ENCODE measurements at regions of chr22 and their contacts with region 1.

Region 1: DNA sequence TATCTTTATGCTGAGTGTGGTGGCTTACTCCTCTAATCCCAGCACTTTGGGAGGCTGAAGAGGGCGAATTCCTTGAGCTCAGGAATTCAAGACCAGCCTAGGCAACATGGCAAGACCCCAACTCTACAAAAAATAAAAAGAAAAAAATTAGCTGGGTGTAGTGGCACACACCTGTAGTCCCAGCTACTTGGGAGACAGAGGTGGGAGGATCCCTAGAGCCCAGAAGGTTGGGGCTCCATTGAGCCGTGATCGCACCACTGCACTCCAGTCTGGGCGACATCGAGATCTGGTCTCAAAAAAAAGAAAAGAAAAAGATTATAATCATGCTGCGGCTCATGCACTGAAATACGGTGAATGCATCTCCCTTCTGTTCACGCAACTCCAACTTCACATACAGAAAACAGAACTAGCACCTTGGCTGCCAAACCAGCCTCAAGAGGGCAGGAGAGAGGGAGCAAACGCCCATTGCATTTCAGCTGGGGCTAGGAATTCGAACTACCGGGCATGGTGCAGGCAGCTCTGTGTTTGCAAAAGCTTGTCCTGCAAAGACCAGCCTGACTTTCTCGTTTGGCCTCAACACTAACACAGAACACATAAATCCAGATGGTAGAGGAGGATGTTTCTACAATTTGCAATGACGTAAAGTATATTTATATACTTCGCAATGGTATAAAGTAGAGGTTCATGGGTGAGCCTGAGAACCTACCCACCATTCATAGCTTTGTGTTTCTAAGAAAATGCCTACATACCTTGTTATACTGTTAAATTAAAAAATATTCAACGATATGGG is 6.3 kb upstream of the SYNGR1 start:
- DNase-seq: peak; percentile 67 to 84 (median 79)
- H3K4me3 ChIP-seq: peak overlapping the region in 1 of 7 experiments; percentile 42
- H3K27ac ChIP-seq: no peak overlapping the region
- H3K4me1 ChIP-seq: peaks cover 0 to 9% (median 8%) of the 10 kb centered on the region in 4 experiments
- H3K27me3 ChIP-seq: no peaks in the 10 kb centered on the region

Region 2: DNA sequence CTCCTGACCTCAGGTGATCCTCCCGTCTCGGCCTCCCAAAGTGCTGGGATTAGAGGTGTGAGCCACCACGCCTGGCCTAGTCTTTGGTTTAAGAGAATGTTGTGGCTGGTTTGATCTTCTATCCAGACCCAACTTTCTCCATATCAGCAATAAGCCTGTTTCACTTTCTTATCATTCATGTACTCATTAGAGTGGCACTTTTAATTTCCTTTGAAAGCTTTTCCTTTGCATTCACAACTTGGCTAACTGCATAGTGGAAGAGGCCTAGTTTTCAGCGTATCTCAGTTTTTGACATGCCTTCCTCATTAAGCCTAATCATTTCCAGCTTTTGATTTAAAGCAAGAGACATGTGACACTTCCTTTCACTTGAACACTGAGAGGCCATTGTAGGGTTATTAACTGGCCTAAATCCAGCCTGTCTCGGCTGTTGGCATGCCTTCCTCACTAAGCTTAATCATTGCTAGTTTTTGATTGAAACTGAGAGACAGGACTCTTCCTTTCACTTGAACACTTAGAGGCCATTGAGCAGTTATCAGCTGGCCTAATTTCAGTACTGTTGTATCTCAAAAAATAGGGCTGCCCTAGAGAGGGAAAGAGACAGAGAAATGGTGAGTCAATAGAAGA is 10.9 kb before region 1 on chr22:
- CTCF ChIA-PET with region 1: interaction called, 24 read pairs
- POLR2A ChIA-PET with region 1: no interaction called
- DNase-seq: peak in 2 of 3 donors; percentile 52 to 64
- H3K4me3 ChIP-seq: no peak overlapping the region
- H3K27ac ChIP-seq: no peak overlapping the region
- H3K4me1 ChIP-seq: peaks cover 0 to 25% (median 15%) of the 10 kb centered on the region in 4 experiments
- H3K27me3 ChIP-seq: no peaks in the 10 kb centered on the region

Region 3: DNA sequence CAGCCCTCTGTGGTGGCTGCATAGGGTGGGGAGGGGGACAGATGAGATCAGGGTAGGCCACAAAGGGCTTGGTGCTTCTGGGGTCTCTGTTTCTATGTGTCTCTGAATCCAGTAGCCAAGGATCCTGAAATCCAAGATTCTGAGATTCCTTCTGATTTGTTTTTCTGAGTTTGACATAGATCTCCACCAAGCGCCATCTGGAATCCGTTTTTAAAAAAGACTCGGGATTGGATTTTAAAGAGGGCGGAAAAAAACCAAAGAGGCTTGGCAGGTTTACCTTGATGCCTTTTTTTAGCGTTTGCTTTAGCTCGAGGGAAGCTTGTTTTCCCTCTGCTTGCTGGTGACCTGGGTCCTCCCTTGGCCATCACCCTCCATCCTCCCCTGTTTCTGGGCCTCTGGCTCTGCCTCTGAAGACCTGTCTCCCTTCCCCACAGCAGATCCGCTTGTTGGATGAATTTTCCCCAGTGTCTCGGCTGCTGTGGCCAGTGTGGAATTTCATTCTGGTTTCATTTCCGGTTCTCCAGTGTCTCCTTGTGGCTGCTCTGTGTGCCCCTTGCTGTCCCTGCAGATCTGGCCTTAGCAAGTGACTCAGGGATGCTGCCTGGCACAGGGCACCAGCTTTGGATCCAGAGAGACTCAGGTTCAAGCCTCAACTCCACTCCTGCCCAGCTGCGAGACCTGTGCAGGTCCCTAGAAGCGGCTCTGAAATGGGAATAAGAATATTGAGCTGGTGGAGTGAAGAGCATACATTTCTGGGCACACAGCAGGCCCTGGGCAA is 21.4 kb after region 1 on chr22:
- CTCF ChIA-PET with region 1: interaction called, 10 read pairs
- POLR2A ChIA-PET with region 1: interaction called, 5 read pairs
- DNase-seq: no peak
- H3K4me3 ChIP-seq: no peak overlapping the region
- H3K27ac ChIP-seq: no peak overlapping the region
- H3K4me1 ChIP-seq: peaks cover 0 to 78% (median 55%) of the 10 kb centered on the region in 4 experiments
- H3K27me3 ChIP-seq: no peaks in the 10 kb centered on the region

Region 4: DNA sequence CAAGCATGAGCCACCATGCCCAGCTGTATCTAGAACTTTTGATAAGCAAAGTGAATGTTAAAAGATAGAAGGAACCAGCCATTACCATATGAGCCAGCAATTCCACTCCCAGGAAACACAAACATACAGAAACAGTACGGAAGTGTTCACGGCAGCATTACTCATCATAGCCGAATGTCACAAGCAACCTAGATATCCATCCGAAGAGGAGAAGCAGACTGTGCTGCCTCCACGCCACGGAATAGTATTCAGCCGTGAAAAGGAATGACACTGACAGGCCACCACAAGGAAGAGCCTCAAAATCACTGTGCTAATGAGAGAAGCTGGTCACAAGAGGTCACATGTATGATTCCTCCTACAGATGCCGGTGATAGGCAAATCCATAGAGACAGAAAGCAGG is 95.7 kb after region 1 on chr22:
- CTCF ChIA-PET with region 1: no interaction called
- POLR2A ChIA-PET with region 1: no interaction called
- DNase-seq: peak in 2 of 3 donors; percentile 41 to 53
- H3K4me3 ChIP-seq: no peak overlapping the region
- H3K27ac ChIP-seq: no peak overlapping the region
- H3K4me1 ChIP-seq: peaks cover 0 to 40% (median 14%) of the 10 kb centered on the region in 4 experiments
- H3K27me3 ChIP-seq: no peaks in the 10 kb centered on the region

Measured in common myeloid progenitor, CD34-positive (primary cell).